Activated naive CD4-positive, alpha-beta T cell treated with anti-CD3 and anti-CD28 coated beads for 36 hours (primary cell): ENCODE measurements at regions of chr1 and their contacts with region 1.

Region 1: GRCh38 chr1:12078938-12079861 is 16.1 kb downstream of the TNFRSF8 start:
- DNase-seq: peak; percentile 78
- H3K4me3 Mint-ChIP-seq: no peak overlapping the region
- H3K27ac Mint-ChIP-seq: no peak overlapping the region
- H3K4me1 Mint-ChIP-seq: peaks cover 18% of the 10 kb centered on the region
- H3K27me3 Mint-ChIP-seq: peaks cover 2% of the 10 kb centered on the region

Region 2: GRCh38 chr1:12001249-12001917 is 77.8 kb before region 1 on chr1:
- CTCF ChIA-PET with region 1: interaction called, 5 read pairs
- intact Hi-C with region 1: loop called (anchors 1 kb)
- DNase-seq: peak; percentile 87
- H3K4me3 Mint-ChIP-seq: no peak overlapping the region
- H3K27ac Mint-ChIP-seq: peak overlapping the region; percentile 80
- H3K4me1 Mint-ChIP-seq: peaks cover 2% of the 10 kb centered on the region
- H3K27me3 Mint-ChIP-seq: no peaks in the 10 kb centered on the region